Left ventricle myocardium inferior (tissue), 1 donor: ENCODE measurements at regions of chr18 and their contacts with region 1.

Region 1: DNA sequence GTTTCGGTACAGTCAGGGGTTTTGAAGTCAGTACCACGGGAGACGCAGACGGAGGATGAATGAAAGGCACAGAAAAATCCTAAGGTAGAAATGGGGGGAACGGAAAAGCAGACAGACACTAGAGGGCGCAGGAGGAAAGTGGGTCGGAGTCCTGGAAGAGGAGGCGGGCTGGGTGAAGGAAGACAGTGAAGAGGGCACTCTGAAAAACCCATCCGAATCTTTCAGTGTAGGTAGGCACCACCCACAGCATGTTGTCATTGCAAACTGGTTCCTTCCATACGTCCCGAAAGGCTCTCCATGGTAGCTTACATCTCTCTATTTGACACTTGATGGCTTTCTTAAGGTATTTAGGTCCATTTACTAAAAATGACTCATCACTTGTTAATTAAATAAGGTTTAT is 18.5 kb upstream of the ZNF236 start:
- DNase-seq: peak; percentile 36
- H3K4me3 ChIP-seq: no peak overlapping the region
- H3K27ac ChIP-seq: no peak overlapping the region
- H3K4me1 ChIP-seq: peaks cover 20% of the 10 kb centered on the region
- H3K27me3 ChIP-seq: peaks cover 8% of the 10 kb centered on the region
- CTCF ChIP-seq: peak; percentile 82

Region 2: DNA sequence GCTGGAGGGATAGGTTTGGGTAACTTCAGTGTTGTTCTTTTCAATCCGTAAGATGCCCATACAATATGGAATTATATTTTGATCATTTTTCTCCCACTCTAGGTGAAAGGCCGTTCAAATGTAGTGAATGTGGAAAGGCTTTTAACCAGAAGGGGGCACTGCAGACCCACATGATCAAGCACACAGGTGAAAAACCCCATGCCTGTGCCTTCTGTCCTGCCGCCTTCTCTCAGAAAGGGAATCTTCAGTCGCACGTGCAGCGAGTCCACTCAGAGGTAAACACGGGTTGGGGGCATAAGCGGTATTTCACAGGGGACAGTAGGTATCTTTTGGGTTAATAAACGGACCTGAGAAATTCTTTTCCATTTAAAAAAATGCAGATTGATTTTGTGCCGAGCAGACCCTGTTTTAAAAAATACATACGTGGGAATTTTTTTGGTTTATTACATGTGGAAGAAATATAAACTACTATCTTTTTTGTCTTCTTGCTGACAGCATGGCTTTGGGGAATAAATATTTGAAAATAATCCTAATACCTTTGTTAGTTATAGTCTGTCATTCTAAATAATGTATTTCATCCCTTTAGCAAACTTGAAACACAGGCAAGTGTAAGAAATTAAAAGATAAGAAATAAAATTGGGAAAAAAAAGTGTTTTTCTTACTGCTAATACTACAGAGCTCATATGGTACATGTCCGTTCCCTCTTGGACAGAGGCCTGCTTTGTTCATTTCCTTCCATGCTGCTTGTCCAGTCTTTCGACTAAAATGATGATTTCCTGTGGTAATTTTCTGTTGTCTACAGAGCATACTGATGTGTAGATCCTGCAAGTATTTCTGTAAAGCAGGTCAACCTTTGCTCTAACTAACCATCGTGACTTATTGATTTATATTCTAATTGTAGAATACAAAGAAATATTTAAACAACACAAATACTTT is 71.8 kb after region 1 on chr18:
- intact Hi-C with region 1: loop called (anchors 10 kb)
- DNase-seq: no peak
- H3K4me3 ChIP-seq: no peak overlapping the region
- H3K27ac ChIP-seq: no peak overlapping the region
- H3K4me1 ChIP-seq: no peaks in the 10 kb centered on the region
- H3K27me3 ChIP-seq: no peaks in the 10 kb centered on the region
- CTCF ChIP-seq: peak; percentile 68

Region 3: DNA sequence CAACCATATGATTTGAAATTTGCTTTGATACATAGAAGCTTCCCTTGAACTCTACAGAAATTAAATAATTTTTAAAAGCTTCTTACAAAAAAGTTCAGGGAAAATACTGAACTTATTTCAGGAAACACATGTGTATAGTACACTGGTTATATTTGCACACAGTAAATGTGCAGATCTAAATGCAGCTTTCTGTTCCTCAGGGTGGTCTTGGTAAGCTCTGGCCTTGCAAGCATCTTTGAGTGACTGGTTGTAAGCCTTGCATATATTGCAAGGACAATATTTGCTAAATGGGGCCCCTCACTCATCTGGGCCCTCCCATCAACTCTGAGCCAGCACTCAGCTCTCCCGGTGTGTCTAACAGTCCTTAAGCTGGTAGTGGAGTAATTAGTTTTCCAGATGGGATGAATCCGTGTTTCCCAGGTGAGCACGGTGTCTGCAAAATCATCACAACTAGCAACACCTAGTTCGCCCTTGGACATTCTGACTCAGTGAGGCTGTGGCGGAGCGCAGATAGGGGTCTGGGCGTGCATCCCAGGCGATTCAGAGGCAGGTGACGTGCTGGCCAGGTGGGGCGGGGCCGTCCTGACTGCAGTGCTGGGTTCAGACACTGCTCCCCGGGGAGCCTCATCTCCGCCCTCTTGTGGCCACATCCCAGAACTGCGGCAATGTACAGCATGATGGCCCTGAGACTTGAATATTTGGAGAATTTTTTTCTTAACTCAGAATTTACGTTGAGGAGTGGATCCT is 179.2 kb after region 1 on chr18:
- intact Hi-C with region 1: loop called (anchors 5 kb)
- DNase-seq: peak; percentile 83
- H3K4me3 ChIP-seq: no peak overlapping the region
- H3K27ac ChIP-seq: no peak overlapping the region
- H3K4me1 ChIP-seq: peaks cover 6% of the 10 kb centered on the region
- H3K27me3 ChIP-seq: peaks cover 5% of the 10 kb centered on the region
- CTCF ChIP-seq: peak; percentile 95

Region 4: DNA sequence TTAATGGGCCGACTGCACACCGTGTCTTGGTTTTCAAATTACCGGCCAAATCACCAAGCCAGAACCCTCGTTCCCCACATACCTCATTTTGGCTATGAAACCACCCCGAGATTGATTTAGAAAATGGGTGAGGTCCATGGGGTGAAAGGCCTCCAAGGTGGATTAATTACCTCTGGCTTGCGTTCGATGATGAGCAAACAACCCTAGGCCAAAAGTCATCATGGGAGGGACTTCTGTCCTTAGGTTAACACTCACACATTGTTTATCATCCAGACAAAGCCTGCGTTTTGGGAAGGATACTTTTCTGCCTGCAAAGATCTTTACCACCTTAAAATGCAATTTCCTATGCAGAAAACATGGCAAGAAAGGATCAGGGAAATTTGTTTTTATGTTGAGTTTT is 494.4 kb after region 1 on chr18:
- intact Hi-C with region 1: no loop called
- DNase-seq: no peak
- H3K4me3 ChIP-seq: no peak overlapping the region
- H3K27ac ChIP-seq: no peak overlapping the region
- H3K4me1 ChIP-seq: no peaks in the 10 kb centered on the region
- H3K27me3 ChIP-seq: peaks cover 43% of the 10 kb centered on the region
- CTCF ChIP-seq: no peak